Dorsolateral prefrontal cortex (tissue), 120 donors: ENCODE measurements at regions of chr3 and their contacts with region 1.

Region 1: DNA sequence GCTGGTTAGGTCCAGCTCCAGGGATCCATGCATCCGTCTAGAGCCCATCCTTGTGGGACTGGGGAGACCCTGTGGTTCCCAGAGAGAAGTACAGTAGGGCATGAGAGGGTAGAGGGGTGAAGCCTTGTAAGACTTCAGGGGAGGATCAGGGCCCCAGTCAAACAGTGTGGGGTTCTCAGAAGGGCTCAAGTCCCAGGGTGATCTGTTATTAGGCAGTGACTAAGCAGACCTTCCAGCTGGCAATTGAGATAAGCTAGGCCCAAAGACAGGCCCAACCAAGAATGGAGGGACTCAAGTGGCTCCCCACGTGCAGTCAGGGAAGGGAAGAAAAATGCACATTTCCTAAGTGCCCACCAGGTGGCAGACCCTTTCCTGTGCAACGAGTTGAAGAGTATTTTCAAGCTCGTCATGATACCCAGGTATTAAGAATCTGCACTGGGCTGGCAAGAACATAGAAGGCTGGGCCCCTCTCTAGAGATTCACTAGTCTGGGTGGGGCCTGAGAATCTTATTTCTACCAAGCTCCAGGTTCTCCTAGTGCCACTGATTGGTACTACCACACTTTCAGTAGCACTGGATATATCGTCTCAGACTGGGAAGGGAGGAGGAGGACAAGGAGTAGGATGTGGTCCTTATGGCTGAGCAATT is 240.8 kb downstream of the NR1D2 start:
- DNase-seq: peak in 3 of 10 donors; percentile 28 to 58 (median 49)
- H3K4me3 ChIP-seq: peak overlapping the region in 3 of 59 donors; percentile 15 to 35 (median 24)
- H3K27ac ChIP-seq: peak overlapping the region in 1 of 59 donors; percentile 14
- H3K27me3 ChIP-seq: no peaks in the 10 kb centered on the region
- CTCF ChIP-seq: peak in 55 of 56 donors; percentile 42 to 78 (median 68)

Region 2: DNA sequence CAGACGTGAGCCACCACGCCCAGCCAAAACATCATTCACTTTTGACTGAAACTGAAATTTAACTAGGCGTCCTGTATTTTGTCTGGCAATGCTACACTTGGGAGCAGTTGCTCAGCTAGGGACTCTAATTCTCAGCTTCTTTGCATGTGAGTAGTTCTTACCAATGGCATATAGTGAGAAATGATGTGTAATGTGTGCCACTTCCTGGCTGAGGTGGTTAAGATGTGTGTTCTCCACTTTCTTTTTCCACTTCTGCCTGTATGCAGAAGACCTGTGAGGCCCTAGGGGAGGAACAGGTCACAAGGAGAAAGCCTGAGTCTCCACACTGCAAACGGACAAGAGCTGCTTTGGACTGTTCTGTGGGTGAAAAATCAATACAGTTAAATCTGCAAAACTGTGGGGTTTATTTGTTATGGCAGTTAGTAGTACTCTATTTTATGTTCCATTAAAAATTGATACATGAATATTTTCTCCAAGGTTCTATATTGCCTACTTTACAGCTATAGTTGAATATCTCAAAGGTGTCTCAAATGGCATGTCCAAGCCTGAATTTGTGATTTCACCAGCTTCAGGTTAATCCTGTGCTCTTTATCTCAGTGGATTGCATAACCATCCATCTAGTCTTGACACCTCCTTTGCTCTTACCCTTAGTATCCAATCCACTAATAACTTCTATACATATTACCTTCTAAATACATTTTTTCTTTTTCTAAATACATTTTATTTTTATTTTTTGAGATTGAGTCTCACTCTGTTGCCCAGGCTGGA is 181.5 kb before region 1 on chr3:
- intact Hi-C with region 1: loop called in 1 of 2 experiments (anchors 5 kb)
- DNase-seq: no peak
- H3K4me3 ChIP-seq: no peak overlapping the region
- H3K27ac ChIP-seq: no peak overlapping the region
- H3K27me3 ChIP-seq: no peaks in the 10 kb centered on the region
- CTCF ChIP-seq: no peak

Region 3: DNA sequence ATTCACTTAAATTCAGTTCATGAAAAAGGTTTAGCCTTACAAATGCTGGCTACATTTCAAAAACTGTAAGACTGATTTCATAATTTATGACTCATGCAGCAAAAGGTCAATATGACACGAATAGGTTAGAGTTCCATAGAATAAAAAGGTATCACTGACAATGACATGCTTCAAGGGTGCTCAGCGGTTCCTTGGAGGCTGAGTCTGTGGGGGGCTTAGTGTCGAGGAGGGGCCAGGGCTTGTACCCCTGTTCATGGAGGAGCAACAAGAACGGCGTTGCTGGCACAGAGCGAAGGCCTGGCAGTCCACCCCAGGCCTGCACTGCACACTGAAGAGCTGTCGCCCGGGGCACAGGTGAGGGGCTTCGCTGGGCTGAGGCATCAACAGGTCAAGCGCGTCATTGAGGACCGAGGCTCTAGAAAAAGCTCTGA is 66.5 kb before region 1 on chr3:
- intact Hi-C with region 1: no loop called
- DNase-seq: no peak
- H3K4me3 ChIP-seq: no peak overlapping the region
- H3K27ac ChIP-seq: no peak overlapping the region
- H3K27me3 ChIP-seq: no peaks in the 10 kb centered on the region
- CTCF ChIP-seq: no peak

Region 4: DNA sequence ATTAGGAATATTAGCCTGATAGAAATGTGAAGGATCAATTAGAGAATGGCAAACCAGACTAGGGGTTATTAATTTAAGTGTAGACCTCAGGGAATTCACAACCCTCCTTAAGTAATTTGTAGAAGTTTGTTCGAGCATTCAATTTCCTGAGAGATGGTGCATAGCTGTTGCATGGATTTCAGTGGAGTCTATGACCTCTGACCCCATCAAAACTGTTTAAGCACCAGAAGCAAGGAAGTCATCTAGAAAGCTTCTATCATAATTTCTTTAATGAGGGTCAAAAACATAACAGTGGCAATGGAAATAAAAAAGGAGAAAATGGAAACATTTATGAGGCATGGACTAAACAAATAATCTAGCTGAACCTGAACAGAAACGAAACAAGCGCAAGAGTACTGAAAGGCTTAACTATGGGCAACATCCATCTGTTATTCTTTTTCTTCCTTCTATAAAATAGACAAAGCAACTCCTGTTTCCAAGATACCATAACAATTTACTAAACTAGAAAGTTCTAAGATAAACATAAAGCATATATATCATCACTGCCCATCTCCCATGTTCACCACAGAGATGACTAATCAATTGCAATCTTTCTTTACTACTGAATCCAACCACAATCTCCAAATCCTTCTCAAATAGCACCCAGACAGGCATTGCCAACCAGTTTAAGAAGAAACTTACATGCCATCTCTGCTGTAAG is 157.4 kb after region 1 on chr3:
- intact Hi-C with region 1: no loop called
- DNase-seq: no peak
- H3K4me3 ChIP-seq: no peak overlapping the region
- H3K27ac ChIP-seq: no peak overlapping the region
- H3K27me3 ChIP-seq: no peaks in the 10 kb centered on the region
- CTCF ChIP-seq: no peak

Region 5: GRCh38 chr3:24420224-24420623 is 234.4 kb after region 1 on chr3:
- intact Hi-C with region 1: no loop called
- DNase-seq: no peak
- H3K4me3 ChIP-seq: no peak overlapping the region
- H3K27ac ChIP-seq: no peak overlapping the region
- H3K27me3 ChIP-seq: no peaks in the 10 kb centered on the region
- CTCF ChIP-seq: no peak